ENCODE measurements at regions of chr21 and their contacts with region 1.

Region 1: DNA sequence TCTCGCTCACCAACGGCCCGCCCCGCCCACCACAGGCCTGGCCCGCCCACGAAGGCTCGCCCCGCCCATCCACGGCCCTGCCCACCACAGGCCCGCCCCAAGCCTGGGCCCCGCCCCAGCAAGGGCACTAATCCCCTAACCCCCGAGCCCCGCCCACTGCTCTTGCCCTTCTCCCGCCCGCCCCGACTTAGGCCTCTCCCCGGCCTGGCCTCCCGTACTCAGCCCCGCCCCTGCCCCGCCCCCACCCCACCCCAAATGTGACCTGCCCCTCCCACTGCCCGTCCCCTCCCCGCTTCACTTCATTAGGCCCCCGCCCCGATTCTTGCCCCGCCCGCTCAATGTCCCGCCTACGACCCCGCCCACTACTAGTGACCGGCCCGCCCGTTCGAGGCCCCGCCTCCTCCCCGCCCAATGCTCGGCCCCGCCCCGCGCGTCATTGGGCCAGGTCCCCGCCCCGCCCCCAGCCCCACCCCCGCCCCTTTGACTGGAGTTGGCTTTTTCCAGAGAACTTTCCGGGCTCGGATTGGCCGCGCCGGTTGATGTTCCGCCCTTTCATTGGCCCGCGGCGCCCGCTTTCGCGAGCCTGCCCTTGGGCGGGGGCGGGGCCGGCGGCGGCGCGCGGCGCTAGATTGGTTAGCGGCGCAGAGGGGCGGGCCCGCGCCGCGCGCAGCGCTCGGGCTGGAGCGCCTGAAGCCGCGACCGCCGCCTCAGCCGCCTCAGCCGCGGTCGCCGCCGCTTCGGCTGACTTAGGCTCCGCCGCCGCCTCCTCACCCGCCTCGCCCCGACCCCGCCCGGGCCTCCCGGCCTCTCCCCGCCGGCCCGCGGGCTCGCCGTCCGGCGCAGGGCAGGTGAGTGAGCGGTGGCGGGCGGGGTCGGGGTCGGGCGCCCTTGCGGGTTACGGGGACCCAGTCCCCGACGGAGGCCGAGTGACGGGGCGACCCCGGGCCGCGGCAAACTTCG is at the start of gene PCBP3:
- DNase-seq: peak; percentile 90
- H3K4me3 Mint-ChIP-seq: peak within 1 kb of the TSS; percentile 65
- H3K27ac Mint-ChIP-seq: no peak within 1 kb of the TSS
- H3K4me1 Mint-ChIP-seq: peaks cover 6% of the 10 kb centered on the region
- H3K27me3 Mint-ChIP-seq: no peaks in the 10 kb centered on the region
- CTCF ChIP-seq: no peak
- total RNA-seq, gene PCBP3: 3.7 and 6.6 TPM in 2 replicates

Region 2: GRCh38 chr21:45618287-45618686 is 25.0 kb before region 1 on chr21:
- CTCF ChIA-PET with region 1: no interaction called
- POLR2A ChIA-PET with region 1: no interaction called
- intact Hi-C with region 1: no loop called
- DNase-seq: peak; percentile 54
- H3K4me3 Mint-ChIP-seq: no peak overlapping the region
- H3K27ac Mint-ChIP-seq: no peak overlapping the region
- H3K4me1 Mint-ChIP-seq: peaks cover 4% of the 10 kb centered on the region
- H3K27me3 Mint-ChIP-seq: peaks cover 31% of the 10 kb centered on the region
- CTCF ChIP-seq: no peak

Region 3: GRCh38 chr21:45669382-45669781 is 26.1 kb after region 1 on chr21:
- CTCF ChIA-PET with region 1: no interaction called
- POLR2A ChIA-PET with region 1: no interaction called
- intact Hi-C with region 1: no loop called
- DNase-seq: no peak
- H3K4me3 Mint-ChIP-seq: no peak overlapping the region
- H3K27ac Mint-ChIP-seq: no peak overlapping the region
- H3K4me1 Mint-ChIP-seq: no peaks in the 10 kb centered on the region
- H3K27me3 Mint-ChIP-seq: no peaks in the 10 kb centered on the region
- CTCF ChIP-seq: no peak

Region 4: DNA sequence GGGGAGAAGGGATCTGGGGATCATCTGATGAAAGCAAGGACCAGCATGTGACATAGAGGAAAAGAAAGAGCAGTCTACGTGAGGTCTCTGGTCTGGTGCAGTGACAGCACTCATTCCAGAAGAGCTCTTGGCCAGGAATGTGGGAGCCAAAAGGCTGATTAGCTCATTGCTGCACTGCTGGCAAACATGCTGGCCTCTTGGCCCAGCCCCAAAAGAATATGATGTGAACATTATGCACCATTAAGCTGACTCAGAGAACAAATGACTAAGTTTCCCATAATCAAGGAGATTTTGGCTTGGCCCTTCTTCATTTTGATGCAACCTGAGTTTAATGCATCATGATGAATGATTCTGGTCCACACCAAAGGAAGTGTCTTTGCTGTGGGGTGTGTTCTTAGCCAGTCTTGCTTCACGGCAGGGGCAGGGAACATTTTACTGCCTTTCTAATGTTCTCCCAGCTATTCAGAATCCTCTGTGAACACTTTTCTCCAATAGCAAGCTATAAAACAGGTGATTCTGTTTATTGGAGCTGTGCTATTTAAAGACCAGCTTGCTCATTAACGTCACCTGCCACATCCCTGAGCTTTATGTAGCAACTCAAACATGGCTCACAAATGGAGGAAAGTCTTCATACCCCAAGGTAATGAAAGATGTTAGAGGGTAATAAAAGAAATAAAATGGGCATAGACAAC is 55.3 kb after region 1 on chr21:
- CTCF ChIA-PET with region 1: no interaction called
- POLR2A ChIA-PET with region 1: interaction called, 5 read pairs
- intact Hi-C with region 1: loop called (anchors 2 kb)
- DNase-seq: peak; percentile 99
- H3K4me3 Mint-ChIP-seq: no peak overlapping the region
- H3K27ac Mint-ChIP-seq: peak overlapping the region; percentile 32
- H3K4me1 Mint-ChIP-seq: peaks cover 20% of the 10 kb centered on the region
- H3K27me3 Mint-ChIP-seq: no peaks in the 10 kb centered on the region
- CTCF ChIP-seq: no peak

Region 5: DNA sequence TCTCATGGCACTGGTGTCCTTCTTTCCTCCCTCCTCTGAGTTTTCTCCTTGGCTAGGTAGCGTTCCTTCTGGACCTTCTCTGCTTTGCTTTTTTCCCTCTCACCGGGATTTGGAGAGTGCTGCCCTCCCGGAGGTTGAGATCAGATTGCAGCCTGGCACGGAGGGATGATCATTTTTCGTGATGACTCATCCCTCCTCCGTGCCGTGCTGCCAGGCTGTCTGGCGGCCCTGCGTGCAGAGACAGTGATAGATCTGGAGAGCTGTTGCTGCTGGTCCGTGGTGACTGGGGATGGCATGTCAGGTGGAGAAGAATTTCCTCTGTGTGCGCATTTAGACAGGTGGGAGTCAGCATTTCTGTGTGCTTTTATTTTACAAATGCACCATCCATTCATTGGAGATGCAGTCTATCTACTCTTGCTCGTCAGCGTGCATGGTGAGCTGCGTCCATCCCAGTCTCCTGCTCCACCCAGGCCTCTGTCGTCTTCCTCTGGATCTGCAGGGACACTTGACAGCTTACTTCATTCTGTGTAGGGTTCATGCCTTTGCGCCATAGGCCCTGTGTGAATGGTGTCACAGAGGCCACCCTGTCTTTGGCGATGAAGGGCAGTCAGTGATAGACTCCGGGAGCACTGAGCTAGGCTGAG is 104.6 kb after region 1 on chr21:
- CTCF ChIA-PET with region 1: no interaction called
- POLR2A ChIA-PET with region 1: no interaction called
- intact Hi-C with region 1: loop called (anchors 5 kb)
- DNase-seq: peak; percentile 86
- H3K4me3 Mint-ChIP-seq: no peak overlapping the region
- H3K27ac Mint-ChIP-seq: no peak overlapping the region
- H3K4me1 Mint-ChIP-seq: peaks cover 10% of the 10 kb centered on the region
- H3K27me3 Mint-ChIP-seq: peaks cover 24% of the 10 kb centered on the region
- CTCF ChIP-seq: no peak

Region 6: DNA sequence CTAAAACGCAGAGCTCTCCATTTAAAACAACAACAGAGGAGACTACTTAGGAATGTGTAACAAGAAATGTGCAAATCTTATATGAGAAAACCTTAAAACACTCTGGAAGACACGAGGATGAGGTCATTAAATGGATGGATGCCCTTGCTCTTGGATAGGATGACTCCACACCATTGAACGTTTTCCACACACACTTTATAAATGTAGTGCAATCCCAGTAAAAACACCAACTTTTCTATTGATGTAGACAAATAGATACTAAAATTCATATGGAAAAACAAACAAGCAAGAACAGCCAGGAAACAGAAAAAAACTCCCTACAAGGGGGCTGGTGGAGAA is 319.9 kb after region 1 on chr21:
- CTCF ChIA-PET with region 1: no interaction called
- POLR2A ChIA-PET with region 1: no interaction called
- intact Hi-C with region 1: no loop called
- DNase-seq: no peak
- H3K4me3 Mint-ChIP-seq: no peak overlapping the region
- H3K27ac Mint-ChIP-seq: no peak overlapping the region
- H3K4me1 Mint-ChIP-seq: peaks cover 2% of the 10 kb centered on the region
- H3K27me3 Mint-ChIP-seq: peaks cover 26% of the 10 kb centered on the region
- CTCF ChIP-seq: no peak

Region 7: GRCh38 chr21:46002841-46003574 is 359.7 kb after region 1 on chr21:
- CTCF ChIA-PET with region 1: no interaction called
- POLR2A ChIA-PET with region 1: no interaction called
- intact Hi-C with region 1: no loop called
- DNase-seq: no peak
- H3K4me3 Mint-ChIP-seq: no peak overlapping the region
- H3K27ac Mint-ChIP-seq: no peak overlapping the region
- H3K4me1 Mint-ChIP-seq: no peaks in the 10 kb centered on the region
- H3K27me3 Mint-ChIP-seq: no peaks in the 10 kb centered on the region
- CTCF ChIP-seq: no peak